Gastrocnemius medialis (tissue), 4 donors: ENCODE measurements at regions of chr16 and their contacts with region 1.

Region 1: DNA sequence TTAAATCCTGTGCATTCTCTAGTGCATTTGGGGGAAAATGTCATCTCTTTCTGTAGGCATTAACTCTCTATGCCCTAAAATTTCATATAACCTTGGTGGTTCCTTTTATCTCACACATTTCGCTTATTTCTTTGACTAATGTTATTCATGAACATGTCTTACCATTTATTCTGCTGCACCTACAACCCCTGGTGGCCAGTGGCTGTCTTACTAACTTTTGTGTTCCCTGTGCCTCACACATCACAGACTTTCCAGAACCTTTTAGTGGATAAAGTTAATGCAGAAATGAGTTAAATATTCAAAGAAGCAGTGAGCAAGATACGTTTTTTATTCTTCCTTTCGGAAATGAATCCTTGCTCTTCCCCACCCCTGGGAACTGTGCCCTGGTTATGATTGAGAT is 111.9 kb downstream of the CDH13 start:
- DNase-seq: no peak
- ATAC-seq: no peak
- H3K4me3 ChIP-seq: no peak overlapping the region
- H3K27ac ChIP-seq: peak overlapping the region in 3 of 4 donors; percentile 86 to 90 (median 88)
- H3K4me1 ChIP-seq: peaks cover 48 to 50% of the 10 kb centered on the region in 2 donors
- H3K27me3 ChIP-seq: no peaks in the 10 kb centered on the region
- CTCF ChIP-seq: peak in 4 of 5 experiments; percentile 13 to 46 (median 26)
- POLR2A ChIP-seq: no peak

Region 2: DNA sequence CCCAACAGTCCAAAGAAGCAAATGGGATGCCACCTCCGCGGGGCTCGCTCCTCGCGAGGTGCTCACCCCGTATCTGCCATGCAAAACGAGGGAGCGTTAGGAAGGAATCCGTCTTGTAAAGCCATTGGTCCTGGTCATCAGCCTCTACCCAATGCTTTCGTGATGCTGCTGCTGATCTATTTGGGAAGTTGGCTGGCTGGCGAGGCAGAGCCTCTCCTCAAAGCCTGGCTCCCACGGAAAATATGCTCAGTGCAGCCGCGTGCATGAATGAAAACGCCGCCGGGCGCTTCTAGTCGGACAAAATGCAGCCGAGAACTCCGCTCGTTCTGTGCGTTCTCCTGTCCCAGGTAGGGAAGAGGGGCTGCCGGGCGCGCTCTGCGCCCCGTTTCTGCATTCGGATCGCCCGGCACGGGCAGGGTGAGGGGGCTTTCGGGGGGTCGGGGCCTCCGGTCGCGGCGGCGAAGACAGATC is 111.9 kb before region 1 on chr16 and contains the start of gene CDH13:
- in situ Hi-C with region 1: no loop called
- intact Hi-C with region 1: loop called (anchors 5 kb)
- DNase-seq: peak; percentile 18 to 40
- ATAC-seq: peak; percentile 7 to 16
- H3K4me3 ChIP-seq: peak within 1 kb of the TSS; percentile 58 to 79 (median 62)
- H3K27ac ChIP-seq: peak within 1 kb of the TSS; percentile 86 to 93 (median 88)
- H3K4me1 ChIP-seq: peaks cover 46 to 50% of the 10 kb centered on the region in 2 donors
- H3K27me3 ChIP-seq: no peaks in the 10 kb centered on the region
- CTCF ChIP-seq: no peak
- POLR2A ChIP-seq: peak; percentile 38 to 60
- total RNA-seq, gene CDH13: 5.8 to 36.7 (median 20.4) TPM

Region 3: GRCh38 chr16:82660075-82660645 is 78.5 kb before region 1 on chr16:
- in situ Hi-C with region 1: no loop called
- intact Hi-C with region 1: loop called (anchors 2 kb)
- DNase-seq: peak; percentile 86 to 93
- ATAC-seq: peak; percentile 93 to 96
- H3K4me3 ChIP-seq: peak overlapping the region; percentile 41 to 56 (median 47)
- H3K27ac ChIP-seq: peak overlapping the region; percentile 92 to 95 (median 94)
- H3K4me1 ChIP-seq: peaks cover 29 to 34% of the 10 kb centered on the region in 2 donors
- H3K27me3 ChIP-seq: no peaks in the 10 kb centered on the region
- CTCF ChIP-seq: no peak
- POLR2A ChIP-seq: peak; percentile 62 to 75

Region 4: GRCh38 chr16:82782715-82783251 is 44.1 kb after region 1 on chr16:
- in situ Hi-C with region 1: no loop called
- intact Hi-C with region 1: loop called (anchors 2 kb)
- DNase-seq: peak; percentile 77 to 86
- ATAC-seq: peak; percentile 87 to 90
- H3K4me3 ChIP-seq: peak overlapping the region; percentile 15 to 47 (median 35)
- H3K27ac ChIP-seq: peak overlapping the region; percentile 85 to 93 (median 89)
- H3K4me1 ChIP-seq: peaks cover 43 to 54% of the 10 kb centered on the region in 2 donors
- H3K27me3 ChIP-seq: no peaks in the 10 kb centered on the region
- CTCF ChIP-seq: no peak
- POLR2A ChIP-seq: no peak

Region 5: GRCh38 chr16:82801361-82801760 is 62.7 kb after region 1 on chr16:
- in situ Hi-C with region 1: no loop called
- intact Hi-C with region 1: no loop called
- DNase-seq: no peak
- ATAC-seq: no peak
- H3K4me3 ChIP-seq: no peak overlapping the region
- H3K27ac ChIP-seq: no peak overlapping the region
- H3K4me1 ChIP-seq: peaks cover 0 to 1% of the 10 kb centered on the region in 2 donors
- H3K27me3 ChIP-seq: no peaks in the 10 kb centered on the region
- CTCF ChIP-seq: no peak
- POLR2A ChIP-seq: no peak

Region 6: GRCh38 chr16:83068686-83069085 is 330.0 kb after region 1 on chr16:
- in situ Hi-C with region 1: no loop called
- intact Hi-C with region 1: loop called (anchors 10 kb)
- DNase-seq: no peak
- ATAC-seq: no peak
- H3K4me3 ChIP-seq: no peak overlapping the region
- H3K27ac ChIP-seq: no peak overlapping the region
- H3K4me1 ChIP-seq: peaks cover 4 to 5% of the 10 kb centered on the region in 2 donors
- H3K27me3 ChIP-seq: no peaks in the 10 kb centered on the region
- CTCF ChIP-seq: no peak
- POLR2A ChIP-seq: no peak